ENCODE measurements at regions of chr6 and their contacts with region 1.

Region 1: DNA sequence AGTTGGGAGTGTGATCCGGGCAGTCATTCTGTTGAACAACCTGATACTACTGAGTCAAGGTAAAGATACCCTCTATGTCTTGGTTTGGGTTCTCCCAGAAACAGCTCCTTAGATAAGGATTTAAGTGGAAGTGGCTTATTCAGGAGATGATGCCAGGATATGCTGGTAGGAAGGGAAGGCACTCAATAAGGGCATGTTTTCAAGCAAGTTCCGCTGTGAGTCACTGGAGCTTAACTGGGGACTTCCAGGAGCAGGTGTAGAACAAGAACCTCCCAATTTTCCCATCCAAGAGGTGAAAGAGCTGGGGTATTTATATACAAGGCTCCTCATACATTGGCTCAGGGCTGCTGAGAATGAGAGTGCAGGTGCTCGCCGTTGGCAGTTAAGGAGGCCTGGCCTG is 218.6 kb downstream of the AKAP7 start:
- DNase-seq: no peak

Region 2: DNA sequence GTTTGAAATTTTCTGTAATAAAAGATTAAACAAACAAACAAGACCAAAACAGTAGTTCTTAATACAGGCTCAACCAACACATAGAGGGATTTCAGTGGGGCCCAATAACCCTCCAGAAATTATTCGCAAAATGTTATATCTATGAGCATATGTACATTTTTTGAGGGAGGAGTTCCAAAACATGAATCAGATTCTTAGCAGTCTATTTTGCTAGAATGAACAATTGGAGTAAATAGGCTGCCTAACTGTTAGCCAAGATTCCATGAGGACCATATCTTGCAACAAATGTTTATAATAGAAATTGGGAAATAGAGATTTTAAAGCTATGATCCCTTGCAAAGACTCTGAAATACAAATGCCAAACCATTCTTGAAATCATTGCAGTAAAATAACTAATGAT is 32.3 kb before region 1 on chr6:
- intact Hi-C with region 1: loop called in 1 of 2 experiments (anchors 2 kb)
- DNase-seq: no peak